A673 (cell line): ENCODE measurements at regions of chr21 and their contacts with region 1.

Region 1: DNA sequence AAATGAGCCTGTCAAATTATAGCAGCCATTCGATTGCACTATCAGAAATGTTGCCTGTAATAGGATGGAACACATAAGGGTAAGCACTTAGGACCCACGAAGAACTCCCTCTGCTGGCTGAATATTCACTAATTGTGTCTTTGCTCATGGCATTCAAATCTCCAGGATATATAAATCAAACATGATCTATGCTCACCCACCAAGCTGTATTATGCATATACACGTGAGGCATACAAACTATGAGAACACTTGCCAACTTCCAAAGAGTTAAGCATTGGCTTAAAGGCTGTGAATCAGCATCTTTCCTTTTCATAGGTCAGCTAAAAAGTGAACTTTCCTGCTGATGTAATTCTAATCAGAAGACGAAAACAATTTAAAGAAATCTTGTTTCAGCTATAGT is 34.5 kb downstream of the TMPRSS15 start:
- DNase-seq: peak; percentile 61
- H3K4me3 ChIP-seq: no peak overlapping the region
- H3K27ac ChIP-seq: no peak overlapping the region
- H3K4me1 ChIP-seq: peaks cover 3% of the 10 kb centered on the region
- H3K27me3 ChIP-seq: no peaks in the 10 kb centered on the region
- CTCF ChIP-seq: peak; percentile 56

Region 2: GRCh38 chr21:17679002-17679600 is 690.0 kb before region 1 on chr21:
- CTCF ChIA-PET with region 1: no interaction called
- POLR2A ChIA-PET with region 1: no interaction called
- intact Hi-C with region 1: loop called (anchors 10 kb)
- DNase-seq: peak; percentile 61
- H3K4me3 ChIP-seq: no peak overlapping the region
- H3K27ac ChIP-seq: no peak overlapping the region
- H3K4me1 ChIP-seq: no peaks in the 10 kb centered on the region
- H3K27me3 ChIP-seq: no peaks in the 10 kb centered on the region
- CTCF ChIP-seq: peak; percentile 77

Region 3: GRCh38 chr21:17925000-17925610 is 444.0 kb before region 1 on chr21:
- CTCF ChIA-PET with region 1: no interaction called
- POLR2A ChIA-PET with region 1: no interaction called
- intact Hi-C with region 1: loop called (anchors 5 kb)
- DNase-seq: peak; percentile 63
- H3K4me3 ChIP-seq: no peak overlapping the region
- H3K27ac ChIP-seq: no peak overlapping the region
- H3K4me1 ChIP-seq: no peaks in the 10 kb centered on the region
- H3K27me3 ChIP-seq: no peaks in the 10 kb centered on the region
- CTCF ChIP-seq: peak; percentile 83

Region 4: DNA sequence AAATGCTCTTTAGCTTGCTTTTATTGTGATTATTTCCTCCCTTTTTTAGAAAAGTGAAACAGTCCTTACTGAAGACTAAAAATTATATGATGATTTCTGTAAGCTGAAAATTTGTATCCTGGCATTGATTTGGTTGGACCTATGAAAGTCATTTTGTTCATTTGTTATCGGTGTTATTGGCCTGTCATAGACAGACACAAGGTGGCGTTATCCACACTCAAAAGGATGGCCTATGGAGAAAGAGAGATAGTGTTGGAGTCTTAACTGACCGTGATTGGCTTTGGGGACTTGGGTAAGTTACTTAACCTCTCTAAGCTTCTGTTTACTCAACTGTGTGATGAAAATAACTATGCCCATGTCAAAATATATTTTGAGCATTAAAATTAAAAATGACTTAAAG is 328.1 kb before region 1 on chr21:
- CTCF ChIA-PET with region 1: no interaction called
- POLR2A ChIA-PET with region 1: no interaction called
- intact Hi-C with region 1: loop called (anchors 10 kb)
- DNase-seq: peak; percentile 57
- H3K4me3 ChIP-seq: no peak overlapping the region
- H3K27ac ChIP-seq: no peak overlapping the region
- H3K4me1 ChIP-seq: no peaks in the 10 kb centered on the region
- H3K27me3 ChIP-seq: no peaks in the 10 kb centered on the region
- CTCF ChIP-seq: peak; percentile 69

Region 5: GRCh38 chr21:18298228-18298627 is 70.9 kb before region 1 on chr21:
- CTCF ChIA-PET with region 1: no interaction called
- POLR2A ChIA-PET with region 1: no interaction called
- intact Hi-C with region 1: loop called (anchors 1 kb)
- DNase-seq: peak; percentile 3
- H3K4me3 ChIP-seq: no peak overlapping the region
- H3K27ac ChIP-seq: no peak overlapping the region
- H3K4me1 ChIP-seq: no peaks in the 10 kb centered on the region
- H3K27me3 ChIP-seq: no peaks in the 10 kb centered on the region
- CTCF ChIP-seq: no peak

Region 6: DNA sequence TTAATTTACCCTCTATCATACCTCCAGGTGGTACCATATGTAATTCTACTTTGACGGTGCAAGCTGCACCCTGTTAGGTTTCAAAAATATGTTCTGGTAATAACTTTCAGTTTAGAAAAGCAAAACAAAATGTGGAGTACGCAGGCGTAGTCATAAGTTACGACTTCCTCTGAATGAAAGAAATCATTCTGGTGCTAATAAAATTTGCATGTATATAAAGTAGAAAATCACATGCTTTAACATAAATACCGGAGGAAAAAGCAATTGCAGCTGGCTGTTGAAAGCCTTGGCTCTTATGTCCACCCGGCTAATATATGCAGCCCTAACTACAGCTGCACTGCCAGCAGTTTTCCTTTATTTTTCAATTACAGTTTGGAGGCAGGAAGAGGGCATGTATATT is 99.7 kb after region 1 on chr21:
- CTCF ChIA-PET with region 1: no interaction called
- POLR2A ChIA-PET with region 1: no interaction called
- intact Hi-C with region 1: no loop called
- DNase-seq: peak; percentile 73
- H3K4me3 ChIP-seq: peak overlapping the region; percentile 20
- H3K27ac ChIP-seq: peak overlapping the region; percentile 58
- H3K4me1 ChIP-seq: peaks cover 19% of the 10 kb centered on the region
- H3K27me3 ChIP-seq: no peaks in the 10 kb centered on the region
- CTCF ChIP-seq: no peak